HEK293T (cell line): ENCODE measurements at regions of chr4 and their contacts with region 1.

Region 1: GRCh38 chr4:10116580-10117358 is at the start of gene WDR1:
- DNase-seq: peak; percentile 94

Region 2: DNA sequence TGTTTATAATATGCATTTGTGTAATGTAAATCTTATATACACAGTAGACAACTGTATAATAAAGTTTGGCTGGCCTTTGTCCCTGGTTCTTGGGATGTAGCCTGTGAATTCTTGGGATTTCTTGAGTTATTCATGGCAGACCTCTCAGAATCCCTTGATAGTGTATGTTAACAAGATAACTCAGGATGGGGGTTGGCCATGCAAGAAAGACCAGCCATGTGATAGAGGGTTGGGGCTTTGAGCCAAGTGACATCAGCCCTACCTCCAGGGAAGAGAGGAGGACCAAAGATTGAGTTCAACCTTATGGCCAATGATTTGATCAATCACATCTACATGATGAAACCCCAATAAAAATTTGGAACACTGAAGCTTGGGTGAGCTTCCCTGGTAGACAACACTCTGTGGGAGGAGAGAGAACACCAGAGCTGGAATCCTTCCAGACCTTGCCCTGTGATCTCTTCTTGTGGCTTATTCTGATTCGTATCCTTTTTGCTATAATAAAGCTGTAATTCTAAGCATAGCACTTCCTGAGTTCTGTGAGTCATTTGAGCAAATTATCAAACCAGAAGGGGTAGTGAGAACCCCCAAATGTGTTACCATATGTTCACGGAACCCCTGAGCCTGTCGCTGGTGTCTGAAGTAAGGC is 106.8 kb before region 1 on chr4:
- CTCF ChIA-PET with region 1: no interaction called
- POLR2A ChIA-PET with region 1: no interaction called
- DNase-seq: no peak

Region 3: GRCh38 chr4:10020784-10021652 is 95.8 kb before region 1 on chr4 and contains the start of gene SLC2A9:
- CTCF ChIA-PET with region 1: no interaction called
- POLR2A ChIA-PET with region 1: no interaction called
- DNase-seq: no peak

Region 4: GRCh38 chr4:10090467-10091250 is 26.1 kb before region 1 on chr4:
- CTCF ChIA-PET with region 1: no interaction called
- POLR2A ChIA-PET with region 1: no interaction called
- DNase-seq: no peak

Region 5: GRCh38 chr4:10106421-10107039 is 10.2 kb before region 1 on chr4:
- CTCF ChIA-PET with region 1: no interaction called
- POLR2A ChIA-PET with region 1: interaction called, 27 read pairs
- DNase-seq: no peak

Region 6: DNA sequence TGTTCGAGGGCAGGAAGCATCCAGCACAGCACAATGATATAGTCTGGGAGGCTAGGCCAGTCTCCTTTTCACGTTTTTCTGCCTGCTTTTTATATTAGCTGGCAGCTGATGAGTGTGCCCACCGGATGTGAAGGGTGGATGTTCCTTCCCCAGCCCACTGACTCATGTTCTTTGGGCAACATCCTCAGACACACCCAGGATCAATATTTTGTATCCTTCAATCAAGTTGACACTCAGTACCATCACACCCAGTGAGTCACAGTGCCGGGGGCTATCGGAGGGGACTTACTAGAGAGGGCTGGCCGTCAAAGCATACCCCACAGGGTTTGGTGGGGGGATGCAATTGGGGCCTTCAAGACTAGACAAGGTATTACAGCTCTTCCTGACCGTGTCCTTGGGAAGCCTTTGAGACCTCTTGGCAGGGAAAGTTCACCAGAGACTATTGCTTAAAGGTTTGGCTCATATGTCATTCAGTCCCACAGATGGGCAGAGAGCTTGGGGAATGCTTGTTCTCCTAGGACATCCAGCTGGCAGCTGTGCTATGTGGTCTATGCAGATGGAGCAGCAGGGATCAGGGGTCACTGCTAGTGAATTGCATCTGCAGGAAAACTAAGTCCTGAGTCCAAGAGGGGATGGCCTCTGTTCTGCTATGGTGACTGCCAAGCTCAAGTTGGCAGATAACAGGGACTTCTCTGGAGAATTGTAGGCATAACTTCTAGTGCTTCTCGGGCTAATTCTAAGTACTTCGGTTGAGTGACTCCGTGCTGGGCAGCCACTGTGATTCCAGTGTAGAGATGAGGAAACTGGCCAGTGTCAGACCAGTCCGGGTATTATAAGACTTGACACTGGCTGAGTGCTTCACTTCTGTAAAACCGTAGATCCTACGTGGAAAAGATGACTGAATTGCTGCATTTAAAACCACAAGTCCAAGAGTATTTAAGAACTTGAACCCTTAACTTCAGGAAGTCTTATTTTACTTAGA is 12.7 kb after region 1 on chr4:
- CTCF ChIA-PET with region 1: no interaction called
- POLR2A ChIA-PET with region 1: interaction called, 15 read pairs
- DNase-seq: no peak